CD8-positive, alpha-beta T cell (primary cell): ENCODE measurements at regions of chr11 and their contacts with region 1.

Region 1: DNA sequence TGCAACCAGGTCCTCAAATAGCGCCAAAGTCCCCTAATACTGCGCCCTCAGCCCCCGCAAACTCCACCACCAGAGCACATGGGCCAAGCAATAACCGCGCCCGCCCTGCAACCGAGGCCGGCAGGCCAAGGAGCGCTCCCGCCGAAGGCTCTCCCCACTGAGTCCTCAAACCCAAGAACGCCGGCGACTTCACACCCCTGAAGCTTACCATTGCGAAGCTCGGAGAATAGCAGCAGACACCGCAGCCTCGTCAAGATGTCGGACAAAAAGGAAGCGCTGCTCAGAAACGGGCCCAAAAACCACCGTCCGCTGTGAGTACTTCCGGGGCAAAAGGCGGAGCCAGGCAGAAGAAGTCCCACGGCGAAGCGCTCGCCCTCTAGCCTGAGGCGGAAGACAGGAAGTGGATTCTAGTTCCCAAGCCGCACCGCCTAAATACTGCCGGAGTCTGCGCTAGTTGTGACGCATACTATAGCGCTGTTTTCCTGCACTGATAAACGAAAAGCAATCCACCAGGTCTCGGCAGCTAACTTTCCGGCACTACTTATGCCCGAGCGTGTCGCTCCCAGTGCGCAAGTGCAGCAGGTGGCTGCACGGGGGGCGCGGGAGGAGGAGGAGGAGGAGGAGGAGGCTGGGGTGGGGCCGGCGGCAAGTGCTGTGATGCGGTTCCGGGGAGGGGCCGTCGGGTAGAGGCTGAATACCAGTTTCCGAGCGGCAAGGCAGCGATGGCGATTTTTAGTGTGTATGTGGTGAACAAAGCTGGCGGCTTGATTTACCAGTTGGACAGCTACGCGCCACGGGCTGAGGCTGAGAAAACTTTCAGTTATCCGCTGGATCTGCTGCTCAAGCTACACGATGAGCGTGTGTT is at the starts of genes RPS25 and TRAPPC4:
- DNase-seq: peak; percentile 90 to 99 (median 95)
- ATAC-seq: peak; percentile 86
- H3K4me3 ChIP-seq: peak within 1 kb of the TSS; percentile 98
- H3K4me3 Mint-ChIP-seq: peak within 1 kb of the TSS; percentile 99
- H3K27ac ChIP-seq: peak within 1 kb of the TSS; percentile 98 to 99
- H3K27ac Mint-ChIP-seq: peak within 1 kb of the TSS; percentile 99
- H3K4me1 ChIP-seq: peaks cover 44% of the 10 kb centered on the region
- H3K4me1 Mint-ChIP-seq: peaks cover 55% of the 10 kb centered on the region
- H3K27me3 ChIP-seq: no peaks in the 10 kb centered on the region
- H3K27me3 Mint-ChIP-seq: no peaks in the 10 kb centered on the region
- CTCF ChIP-seq: no peak
- total RNA-seq, gene RPS25: 2,737 to 2,869 TPM
- total RNA-seq, gene TRAPPC4: 65.6 to 73.3 TPM

Region 2: GRCh38 chr11:118572061-118572980 is 446.0 kb before region 1 on chr11 and contains the start of gene ARCN1:
- CTCF ChIA-PET with region 1: no interaction called
- POLR2A ChIA-PET with region 1: interaction called, 3 read pairs
- intact Hi-C with region 1: loop called (anchors 5 kb)
- DNase-seq: peak; percentile 61 to 91 (median 77)
- ATAC-seq: peak; percentile 91
- H3K4me3 ChIP-seq: peak within 1 kb of the TSS; percentile 99 to 100
- H3K4me3 Mint-ChIP-seq: peak within 1 kb of the TSS; percentile 94
- H3K27ac ChIP-seq: peak within 1 kb of the TSS; percentile 96 to 99
- H3K27ac Mint-ChIP-seq: peak within 1 kb of the TSS; percentile 97
- H3K4me1 ChIP-seq: peaks cover 34% of the 10 kb centered on the region
- H3K4me1 Mint-ChIP-seq: peaks cover 49% of the 10 kb centered on the region
- H3K27me3 ChIP-seq: no peaks in the 10 kb centered on the region
- H3K27me3 Mint-ChIP-seq: no peaks in the 10 kb centered on the region
- CTCF ChIP-seq: no peak
- total RNA-seq, gene ARCN1: 77.8 to 81.2 TPM

Region 3: DNA sequence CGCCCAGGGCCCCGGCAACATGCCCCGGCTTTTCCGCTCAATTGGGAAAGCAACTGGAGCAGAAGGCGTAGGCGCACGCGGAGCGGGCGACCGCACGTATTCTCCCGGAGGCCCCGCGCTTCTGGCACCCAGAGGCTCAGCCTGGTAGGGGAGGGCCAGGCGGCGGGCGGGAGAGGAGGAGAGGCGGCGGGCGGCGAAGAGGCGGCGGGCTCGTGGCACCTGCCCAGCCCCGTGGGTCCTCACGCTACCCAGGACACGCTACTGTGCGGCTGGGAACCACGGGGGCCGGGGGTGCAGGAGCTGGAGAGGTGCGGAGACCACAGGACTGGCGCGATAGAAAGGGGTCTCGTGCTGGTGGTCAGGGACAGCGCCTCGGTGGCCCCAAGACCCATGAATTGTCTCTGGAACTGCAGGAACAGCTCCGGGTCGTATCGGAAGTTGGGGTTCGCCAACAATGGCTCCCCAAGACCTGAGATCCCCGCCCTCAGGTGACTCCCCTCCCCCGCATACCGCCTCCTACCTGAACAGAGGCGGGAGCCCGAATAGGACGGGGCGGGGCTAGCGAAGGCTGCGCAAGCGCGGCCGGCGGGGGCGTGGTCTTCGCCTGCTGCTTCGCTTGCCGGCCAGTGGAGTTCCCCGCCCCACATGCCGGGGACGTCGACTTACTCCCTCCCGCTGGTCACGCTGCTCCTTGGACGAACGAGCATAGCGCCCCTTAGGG is 12.2 kb after region 1 on chr11 and contains the start of gene SLC37A4:
- CTCF ChIA-PET with region 1: interaction called, 6 read pairs
- POLR2A ChIA-PET with region 1: interaction called, 21 read pairs
- intact Hi-C with region 1: loop called (anchors 1 kb)
- DNase-seq: peak; percentile 97 to 100 (median 99)
- ATAC-seq: peak; percentile 93
- H3K4me3 ChIP-seq: peak within 1 kb of the TSS; percentile 94 to 99
- H3K4me3 Mint-ChIP-seq: peak within 1 kb of the TSS; percentile 89
- H3K27ac ChIP-seq: peak within 1 kb of the TSS; percentile 65 to 71
- H3K27ac Mint-ChIP-seq: peak within 1 kb of the TSS; percentile 88
- H3K4me1 ChIP-seq: peaks cover 13% of the 10 kb centered on the region
- H3K4me1 Mint-ChIP-seq: peaks cover 18% of the 10 kb centered on the region
- H3K27me3 ChIP-seq: no peaks in the 10 kb centered on the region
- H3K27me3 Mint-ChIP-seq: no peaks in the 10 kb centered on the region
- CTCF ChIP-seq: peak; percentile 34
- total RNA-seq, gene SLC37A4: 4.0 to 4.6 TPM

Region 4: GRCh38 chr11:119084663-119085436 is 66.5 kb after region 1 on chr11 and contains the start of gene HMBS:
- CTCF ChIA-PET with region 1: no interaction called
- POLR2A ChIA-PET with region 1: interaction called, 9 read pairs
- intact Hi-C with region 1: loop called in 1 of 2 experiments (anchors 1 kb)
- DNase-seq: peak; percentile 78 to 97 (median 92)
- ATAC-seq: peak; percentile 93
- H3K4me3 ChIP-seq: peak within 1 kb of the TSS; percentile 92
- H3K4me3 Mint-ChIP-seq: peak within 1 kb of the TSS; percentile 91
- H3K27ac ChIP-seq: peak within 1 kb of the TSS; percentile 75 to 86
- H3K27ac Mint-ChIP-seq: peak within 1 kb of the TSS; percentile 93
- H3K4me1 ChIP-seq: peaks cover 18% of the 10 kb centered on the region
- H3K4me1 Mint-ChIP-seq: peaks cover 20% of the 10 kb centered on the region
- H3K27me3 ChIP-seq: no peaks in the 10 kb centered on the region
- H3K27me3 Mint-ChIP-seq: no peaks in the 10 kb centered on the region
- CTCF ChIP-seq: no peak
- total RNA-seq, gene HMBS: 5.4 to 6.4 TPM

Region 5: DNA sequence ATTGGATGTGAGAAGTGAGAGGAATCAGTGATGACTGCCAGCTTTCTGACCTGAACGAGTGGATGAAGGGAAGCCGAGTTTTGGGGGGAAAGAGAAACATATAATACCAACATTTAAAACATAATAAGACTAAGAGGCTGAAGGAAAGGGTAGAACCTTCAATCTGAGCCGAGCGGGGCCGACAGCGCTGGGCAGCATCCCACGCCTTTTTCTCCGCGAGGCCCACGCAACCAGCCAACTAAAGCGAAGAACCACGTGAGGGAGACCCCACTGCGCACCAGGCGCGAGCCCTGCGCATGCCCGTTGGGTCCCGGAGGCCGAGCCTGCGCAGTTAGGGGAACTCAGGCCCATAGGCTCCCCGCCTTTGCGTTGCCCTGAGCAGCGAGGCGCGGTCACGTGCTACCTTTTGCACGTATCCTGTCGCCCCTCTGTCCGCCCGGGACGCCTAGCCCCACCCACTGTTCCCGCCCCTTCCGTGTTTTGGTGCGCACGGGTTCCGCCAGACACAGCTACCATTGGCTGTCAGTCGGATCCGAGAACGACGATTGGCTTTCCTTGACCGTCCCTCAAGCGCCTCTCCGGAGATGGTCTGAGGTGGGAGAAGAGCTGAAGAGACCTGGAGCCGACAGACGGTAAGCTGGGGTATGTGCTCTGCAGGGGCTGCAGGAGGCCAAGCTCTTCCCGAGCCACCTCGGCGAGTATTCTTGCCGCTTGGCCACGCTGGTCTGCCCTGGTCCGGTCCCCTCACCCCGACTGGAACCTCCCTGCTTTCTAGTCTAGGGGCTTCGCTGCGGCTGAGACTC is 102.9 kb after region 1 on chr11 and contains the start of gene HINFP:
- CTCF ChIA-PET with region 1: no interaction called
- POLR2A ChIA-PET with region 1: interaction called, 4 read pairs
- intact Hi-C with region 1: loop called in 1 of 2 experiments (anchors 1 kb)
- DNase-seq: peak; percentile 100
- ATAC-seq: peak; percentile 97
- H3K4me3 ChIP-seq: peak within 1 kb of the TSS; percentile 81 to 93
- H3K4me3 Mint-ChIP-seq: peak within 1 kb of the TSS; percentile 87
- H3K27ac ChIP-seq: peak within 1 kb of the TSS; percentile 69 to 80
- H3K27ac Mint-ChIP-seq: peak within 1 kb of the TSS; percentile 92
- H3K4me1 ChIP-seq: peaks cover 24% of the 10 kb centered on the region
- H3K4me1 Mint-ChIP-seq: peaks cover 43% of the 10 kb centered on the region
- H3K27me3 ChIP-seq: no peaks in the 10 kb centered on the region
- H3K27me3 Mint-ChIP-seq: no peaks in the 10 kb centered on the region
- CTCF ChIP-seq: no peak
- total RNA-seq, gene HINFP: 17.0 to 19.5 TPM